ENCODE measurements at regions of chr4 and their contacts with region 1.

Region 1: GRCh38 chr4:7673121-7673520 is 238.4 kb upstream of the PSAPL1 start:
- DNase-seq: no peak
- ATAC-seq: no peak
- H3K4me3 ChIP-seq: no peak overlapping the region
- H3K27ac ChIP-seq: no peak overlapping the region
- H3K4me1 ChIP-seq: no peaks in the 10 kb centered on the region
- H3K27me3 ChIP-seq: no peaks in the 10 kb centered on the region
- CTCF ChIP-seq: no peak

Region 2: GRCh38 chr4:7761720-7762119 is 88.6 kb after region 1 on chr4:
- CTCF ChIA-PET with region 1: no interaction called
- POLR2A ChIA-PET with region 1: no interaction called
- in situ Hi-C with region 1: no loop called
- intact Hi-C with region 1: no loop called
- DNase-seq: no peak
- ATAC-seq: peak; percentile 25
- H3K4me3 ChIP-seq: no peak overlapping the region
- H3K27ac ChIP-seq: peak overlapping the region; percentile 94
- H3K4me1 ChIP-seq: peaks cover 81% of the 10 kb centered on the region
- H3K27me3 ChIP-seq: no peaks in the 10 kb centered on the region
- CTCF ChIP-seq: no peak

Region 3: DNA sequence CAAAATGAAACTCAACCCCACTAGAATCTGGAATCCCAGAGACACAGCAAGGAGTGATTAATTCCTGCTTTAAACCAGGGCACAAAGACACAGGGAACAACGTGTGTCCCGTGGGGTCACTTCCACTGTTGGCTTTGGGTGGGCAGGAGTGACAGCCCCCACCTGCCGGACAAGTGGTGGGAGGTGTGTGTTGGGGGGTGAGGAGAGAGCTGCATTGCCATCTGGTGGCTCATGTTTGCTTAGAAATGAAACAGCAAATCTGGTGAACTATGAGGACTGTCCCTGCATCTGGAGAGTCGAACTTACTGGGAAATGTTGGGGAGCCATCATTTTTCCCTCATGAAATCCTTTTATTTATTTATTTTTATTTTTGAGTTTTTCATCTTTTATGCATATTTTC is 342.4 kb after region 1 on chr4:
- CTCF ChIA-PET with region 1: interaction called, 13 read pairs
- POLR2A ChIA-PET with region 1: no interaction called
- in situ Hi-C with region 1: no loop called
- intact Hi-C with region 1: no loop called
- DNase-seq: no peak
- ATAC-seq: peak; percentile 59; the same call in 1 of the 2 replicates
- H3K4me3 ChIP-seq: peak overlapping the region in 1 of 2 experiments; percentile 27; a peak in 2 of 4 replicates
- H3K27ac ChIP-seq: no peak overlapping the region
- H3K4me1 ChIP-seq: no peaks in the 10 kb centered on the region
- H3K27me3 ChIP-seq: no peaks in the 10 kb centered on the region
- CTCF ChIP-seq: peak; percentile 68; the same call in 1 of the 2 replicates

Measured in Panc1 (cell line).